ENCODE measurements at regions of chr3 and their contacts with region 1.

Region 1: GRCh38 chr3:119652306-119653033 is 7.9 kb downstream of the POPDC2 start:
- DNase-seq: peak; percentile 94 to 99
- ATAC-seq: peak; percentile 91 to 97
- H3K4me3 ChIP-seq: peak overlapping the region in 1 of 4 donors; percentile 2
- H3K27ac ChIP-seq: peak overlapping the region; percentile 94 to 96 (median 95)
- H3K4me1 ChIP-seq: peaks cover 77 to 82% of the 10 kb centered on the region in 2 donors
- H3K27me3 ChIP-seq: no peaks in the 10 kb centered on the region
- CTCF ChIP-seq: no peak
- POLR2A ChIP-seq: peak; percentile 38 to 76

Region 2: DNA sequence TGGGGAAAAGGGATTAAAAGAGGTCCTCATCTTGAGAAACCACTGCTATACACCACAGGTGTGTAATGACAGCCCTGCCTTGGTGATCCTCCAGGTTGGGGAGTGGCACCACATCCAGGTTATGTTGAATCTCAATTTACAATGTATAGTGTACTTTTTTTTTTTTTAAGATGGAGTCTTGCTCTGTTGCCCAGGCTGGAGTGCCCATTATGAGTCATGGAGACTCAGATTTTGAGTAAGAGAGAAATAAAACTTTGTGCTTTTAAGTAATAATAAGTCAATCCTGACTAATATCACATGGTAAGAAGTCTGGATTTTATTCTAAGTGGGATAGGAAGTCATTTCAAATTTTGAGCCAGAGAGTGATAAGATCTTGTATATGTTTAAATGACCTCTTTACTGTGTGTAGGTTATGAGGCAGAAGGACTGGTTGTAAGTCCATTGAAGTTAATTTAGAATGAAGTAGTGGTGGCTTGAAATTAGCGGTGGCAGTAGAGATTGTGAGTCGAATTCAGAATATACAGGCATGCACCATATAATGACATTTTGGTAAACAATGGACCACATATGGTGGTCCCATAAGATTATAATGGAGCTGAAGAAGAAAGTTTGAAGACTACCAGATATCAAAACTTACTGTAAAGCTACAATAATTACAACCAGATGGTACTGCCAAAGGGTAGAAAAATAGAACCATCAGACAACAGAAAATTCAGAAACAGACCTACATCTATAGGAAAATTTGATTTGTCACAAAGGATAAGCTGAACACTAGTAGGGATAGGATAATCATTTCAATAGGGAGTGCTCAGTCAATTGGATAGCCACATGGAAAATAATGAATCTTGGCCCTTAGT is 12.7 kb before region 1 on chr3:
- in situ Hi-C with region 1: no loop called
- intact Hi-C with region 1: loop called (anchors 1 kb)
- DNase-seq: no peak
- ATAC-seq: no peak
- H3K4me3 ChIP-seq: no peak overlapping the region
- H3K27ac ChIP-seq: peak overlapping the region; percentile 94 to 96 (median 95)
- H3K4me1 ChIP-seq: peaks cover 62 to 70% of the 10 kb centered on the region in 2 donors
- H3K27me3 ChIP-seq: no peaks in the 10 kb centered on the region
- CTCF ChIP-seq: no peak
- POLR2A ChIP-seq: no peak

Region 3: DNA sequence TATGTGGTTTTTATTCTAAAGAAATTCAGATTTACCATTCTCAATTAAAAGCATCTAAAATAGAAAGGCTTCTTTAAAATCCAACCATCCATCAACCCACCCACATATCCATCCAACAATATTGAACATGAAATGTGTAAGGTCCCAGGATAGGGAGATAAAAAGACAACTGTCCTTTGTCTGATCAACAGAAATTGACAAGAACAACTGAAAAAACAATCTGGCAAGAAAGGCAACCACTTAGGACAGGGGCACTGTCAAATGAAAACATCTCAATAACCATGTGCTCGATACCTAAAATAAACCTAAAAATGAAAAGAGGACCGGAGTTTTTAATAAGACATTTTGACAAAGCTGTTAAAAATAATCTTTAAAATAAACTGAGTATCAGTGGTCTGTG is 196.7 kb after region 1 on chr3:
- in situ Hi-C with region 1: no loop called
- intact Hi-C with region 1: no loop called
- DNase-seq: no peak
- ATAC-seq: no peak
- H3K4me3 ChIP-seq: no peak overlapping the region
- H3K27ac ChIP-seq: no peak overlapping the region
- H3K4me1 ChIP-seq: peaks cover 0 to 15% of the 10 kb centered on the region in 2 donors
- H3K27me3 ChIP-seq: no peaks in the 10 kb centered on the region
- CTCF ChIP-seq: no peak
- POLR2A ChIP-seq: no peak

Region 4: GRCh38 chr3:120119846-120120510 is 467.5 kb after region 1 on chr3:
- in situ Hi-C with region 1: no loop called
- intact Hi-C with region 1: no loop called
- DNase-seq: no peak
- ATAC-seq: no peak
- H3K4me3 ChIP-seq: no peak overlapping the region
- H3K27ac ChIP-seq: no peak overlapping the region
- H3K4me1 ChIP-seq: no peaks in the 10 kb centered on the region
- H3K27me3 ChIP-seq: no peaks in the 10 kb centered on the region
- CTCF ChIP-seq: no peak
- POLR2A ChIP-seq: no peak